ENCODE measurements at regions of chr1 and their contacts with region 1.

Region 1: GRCh38 chr1:6245086-6245868 is 1.3 kb downstream of the HES3 start:
- DNase-seq: peak; percentile 75
- H3K4me3 Mint-ChIP-seq: peak overlapping the region; percentile 10
- H3K27ac Mint-ChIP-seq: no peak overlapping the region
- H3K4me1 Mint-ChIP-seq: peaks cover 5% of the 10 kb centered on the region
- H3K27me3 Mint-ChIP-seq: peaks cover 30% of the 10 kb centered on the region
- CTCF ChIP-seq: peak; percentile 91

Region 2: GRCh38 chr1:6052543-6053205 is 192.6 kb before region 1 on chr1:
- CTCF ChIA-PET with region 1: interaction called, 22 read pairs
- POLR2A ChIA-PET with region 1: no interaction called
- intact Hi-C with region 1: loop called (anchors 1 kb)
- DNase-seq: peak; percentile 72
- H3K4me3 Mint-ChIP-seq: no peak overlapping the region
- H3K27ac Mint-ChIP-seq: no peak overlapping the region
- H3K4me1 Mint-ChIP-seq: peaks cover 10% of the 10 kb centered on the region
- H3K27me3 Mint-ChIP-seq: no peaks in the 10 kb centered on the region
- CTCF ChIP-seq: peak; percentile 45

Region 3: GRCh38 chr1:6259491-6260425 is 14.5 kb after region 1 on chr1:
- CTCF ChIA-PET with region 1: interaction called, 52 read pairs
- POLR2A ChIA-PET with region 1: interaction called, 3 read pairs
- intact Hi-C with region 1: no loop called
- DNase-seq: peak; percentile 87
- H3K4me3 Mint-ChIP-seq: peak overlapping the region; percentile 63
- H3K27ac Mint-ChIP-seq: no peak overlapping the region
- H3K4me1 Mint-ChIP-seq: peaks cover 12% of the 10 kb centered on the region
- H3K27me3 Mint-ChIP-seq: no peaks in the 10 kb centered on the region
- CTCF ChIP-seq: no peak

Region 4: DNA sequence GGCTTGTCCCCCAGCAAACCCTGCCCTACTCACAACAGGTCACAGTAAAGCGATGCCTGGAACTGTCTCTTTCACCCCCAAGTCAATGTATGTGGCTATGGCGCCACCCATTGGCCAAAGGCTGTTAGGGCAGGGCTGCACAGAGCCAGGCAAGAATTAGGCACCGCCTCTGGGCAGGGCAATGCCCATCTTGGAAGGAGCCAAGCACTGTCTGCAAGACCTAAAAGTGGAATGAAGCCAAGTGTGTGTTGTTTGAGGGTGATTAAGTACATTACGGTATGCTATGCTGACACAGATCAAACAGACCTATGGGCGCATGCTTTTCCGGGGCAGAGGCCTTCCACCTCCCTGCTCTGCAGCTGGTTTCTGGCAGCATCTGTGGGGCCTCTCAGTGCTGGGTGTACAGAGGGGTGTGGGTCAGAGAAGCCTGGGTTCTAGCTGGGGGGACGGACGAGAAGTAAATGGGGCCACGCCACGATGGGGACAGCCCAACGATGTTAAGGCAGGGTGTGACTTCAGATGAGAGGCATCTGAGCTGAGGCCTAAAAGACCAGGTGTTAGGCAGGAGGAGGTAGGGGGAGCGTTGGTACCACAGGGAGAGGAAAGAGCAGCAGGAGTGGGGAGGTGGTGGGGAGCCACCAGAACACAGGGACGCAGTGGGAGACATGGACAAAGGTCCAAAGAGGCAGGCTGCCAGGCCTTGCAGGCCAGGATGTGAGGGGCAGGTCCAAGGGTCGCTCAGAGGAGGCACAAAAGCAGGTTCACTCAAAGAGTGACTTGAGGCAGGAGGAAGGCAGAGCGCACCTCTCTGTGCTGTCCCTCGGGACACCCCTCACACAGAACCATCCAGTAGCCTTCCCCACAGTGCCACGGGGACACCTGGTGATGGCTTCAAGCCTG is 98.5 kb after region 1 on chr1:
- CTCF ChIA-PET with region 1: interaction called, 88 read pairs
- POLR2A ChIA-PET with region 1: interaction called, 3 read pairs
- intact Hi-C with region 1: loop called (anchors 1 kb)
- DNase-seq: peak; percentile 98
- H3K4me3 Mint-ChIP-seq: no peak overlapping the region
- H3K27ac Mint-ChIP-seq: peak overlapping the region; percentile 68
- H3K4me1 Mint-ChIP-seq: peaks cover 15% of the 10 kb centered on the region
- H3K27me3 Mint-ChIP-seq: no peaks in the 10 kb centered on the region
- CTCF ChIP-seq: peak; percentile 93

Region 5: DNA sequence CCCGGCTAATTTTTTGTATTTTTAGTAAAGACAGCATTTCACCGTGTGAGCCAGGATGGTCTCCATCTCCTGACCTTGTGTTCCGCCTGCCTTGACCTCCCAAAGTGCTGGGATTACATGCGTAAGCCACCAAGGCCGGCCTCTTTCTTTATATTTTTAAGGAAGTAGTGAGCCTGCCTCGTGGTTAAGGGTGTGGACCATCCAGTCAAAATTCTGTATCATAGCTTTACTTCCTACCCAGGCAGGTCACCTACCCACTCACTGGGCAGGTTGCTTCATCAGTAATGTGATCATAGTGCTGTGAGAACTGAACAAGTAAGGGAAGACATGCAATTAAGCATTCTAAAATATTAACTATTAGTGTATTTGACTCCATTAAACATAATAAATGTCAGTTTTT is 156.4 kb after region 1 on chr1:
- CTCF ChIA-PET with region 1: interaction called, 35 read pairs
- POLR2A ChIA-PET with region 1: interaction called, 3 read pairs
- intact Hi-C with region 1: loop called (anchors 1 kb)
- DNase-seq: no peak
- H3K4me3 Mint-ChIP-seq: no peak overlapping the region
- H3K27ac Mint-ChIP-seq: no peak overlapping the region
- H3K4me1 Mint-ChIP-seq: no peaks in the 10 kb centered on the region
- H3K27me3 Mint-ChIP-seq: no peaks in the 10 kb centered on the region
- CTCF ChIP-seq: no peak

Region 6: GRCh38 chr1:6438047-6438525 is 192.8 kb after region 1 on chr1:
- CTCF ChIA-PET with region 1: interaction called, 5 read pairs
- POLR2A ChIA-PET with region 1: no interaction called
- intact Hi-C with region 1: loop called (anchors 2 kb)
- DNase-seq: peak; percentile 77
- H3K4me3 Mint-ChIP-seq: no peak overlapping the region
- H3K27ac Mint-ChIP-seq: no peak overlapping the region
- H3K4me1 Mint-ChIP-seq: peaks cover 13% of the 10 kb centered on the region
- H3K27me3 Mint-ChIP-seq: no peaks in the 10 kb centered on the region
- CTCF ChIP-seq: peak; percentile 89